IMR-90 (cell line): ENCODE measurements at regions of chr13 and their contacts with region 1.

Region 1: DNA sequence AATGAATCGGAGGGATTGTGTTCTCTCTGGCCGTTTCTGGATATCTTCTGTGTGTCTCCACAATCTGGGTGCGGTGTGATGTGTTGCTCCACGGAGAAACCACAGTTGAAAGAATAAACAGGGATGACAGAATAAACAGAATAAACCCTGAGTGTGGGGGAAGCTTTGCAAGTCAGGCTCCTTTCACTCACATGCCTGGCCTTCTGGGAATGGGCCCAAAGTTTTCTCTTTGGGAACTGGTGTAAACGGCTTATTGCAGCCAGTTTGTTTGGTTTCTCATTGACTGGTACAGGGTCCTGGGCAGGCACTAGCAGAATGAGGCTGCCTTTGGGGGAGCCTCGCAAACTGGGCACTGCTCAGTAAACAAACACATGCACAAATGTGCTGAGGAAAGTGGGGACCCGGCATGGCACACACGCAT is 324.7 kb downstream of the DLEU7 start:
- DNase-seq: peak; percentile 72
- ATAC-seq: peak; percentile 71
- H3K4me3 ChIP-seq: no peak overlapping the region
- H3K27ac ChIP-seq: peak overlapping the region; percentile 71; the same call in 1 of the 2 replicates
- H3K4me1 ChIP-seq: peaks cover 13% of the 10 kb centered on the region
- H3K27me3 ChIP-seq: no peaks in the 10 kb centered on the region
- CTCF ChIP-seq: no peak
- POLR2A ChIP-seq: no peak
- RAD21 ChIP-seq: no peak

Region 2: GRCh38 chr13:50437252-50437651 is 81.5 kb before region 1 on chr13:
- CTCF ChIA-PET with region 1: no interaction called
- POLR2A ChIA-PET with region 1: no interaction called
- dilution Hi-C with region 1: no loop called
- in situ Hi-C with region 1: no loop called
- intact Hi-C with region 1: loop called (anchors 5 kb)
- DNase-seq: peak; percentile 87
- ATAC-seq: peak; percentile 98
- H3K4me3 ChIP-seq: no peak overlapping the region
- H3K27ac ChIP-seq: no peak overlapping the region; the same call in 1 of the 2 replicates
- H3K4me1 ChIP-seq: peaks cover 5% of the 10 kb centered on the region
- H3K27me3 ChIP-seq: no peaks in the 10 kb centered on the region
- CTCF ChIP-seq: no peak
- POLR2A ChIP-seq: no peak
- RAD21 ChIP-seq: no peak